ENCODE measurements at regions of chr11 and their contacts with region 1.

Region 1: DNA sequence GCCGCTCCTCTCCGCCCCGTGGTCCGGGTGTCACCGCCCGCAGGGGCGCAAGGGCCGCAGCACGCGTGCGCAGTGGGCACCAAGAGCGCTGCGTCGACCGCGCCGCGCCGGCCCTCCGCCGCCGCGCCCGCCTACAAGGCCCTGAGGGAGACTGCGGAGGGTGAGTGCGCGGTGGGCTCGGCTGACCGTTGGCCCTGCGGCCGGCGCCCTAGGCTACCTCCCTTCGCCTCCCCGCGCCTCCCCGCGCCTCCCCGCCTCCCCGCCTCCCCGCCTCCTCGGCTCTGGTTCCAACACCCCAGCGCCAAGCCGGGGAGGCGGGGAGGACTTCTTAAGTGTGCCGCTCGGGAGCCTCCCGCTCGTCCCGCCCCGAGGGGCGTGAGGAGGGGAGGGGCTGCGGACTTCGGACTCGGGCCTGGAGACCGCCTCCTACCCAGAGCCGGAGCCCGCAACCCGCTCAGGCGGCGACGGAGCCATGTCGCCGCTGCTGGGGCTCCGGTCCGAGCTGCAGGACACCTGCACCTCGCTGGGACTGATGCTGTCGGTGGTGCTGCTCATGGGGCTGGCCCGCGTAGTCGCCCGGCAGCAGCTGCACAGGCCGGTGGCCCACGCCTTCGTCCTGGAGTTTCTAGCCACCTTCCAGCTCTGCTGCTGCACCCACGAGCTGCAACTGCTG is at the start of gene AQP11:
- DNase-seq: peak; percentile 88
- ATAC-seq: peak; percentile 96
- total RNA-seq, gene AQP11: 1.4 TPM

Region 2: GRCh38 chr11:75850787-75851186 is 1738.9 kb before region 1 on chr11:
- intact Hi-C with region 1: loop called (anchors 5 kb)
- DNase-seq: no peak
- ATAC-seq: peak; percentile 57

Region 3: GRCh38 chr11:77381729-77382685 is 207.7 kb before region 1 on chr11:
- intact Hi-C with region 1: no loop called
- DNase-seq: no peak
- ATAC-seq: no peak